ENCODE measurements at regions of chrX and their contacts with region 1.

Region 1: GRCh38 chrX:65985922-65986588 is 53.8 kb downstream of the VSIG4 start:
- DNase-seq: no peak
- H3K4me3 ChIP-seq: no peak overlapping the region
- H3K27ac ChIP-seq: no peak overlapping the region
- H3K4me1 ChIP-seq: no peaks in the 10 kb centered on the region
- H3K27me3 ChIP-seq: no peaks in the 10 kb centered on the region
- CTCF ChIP-seq: peak; percentile 66

Region 2: DNA sequence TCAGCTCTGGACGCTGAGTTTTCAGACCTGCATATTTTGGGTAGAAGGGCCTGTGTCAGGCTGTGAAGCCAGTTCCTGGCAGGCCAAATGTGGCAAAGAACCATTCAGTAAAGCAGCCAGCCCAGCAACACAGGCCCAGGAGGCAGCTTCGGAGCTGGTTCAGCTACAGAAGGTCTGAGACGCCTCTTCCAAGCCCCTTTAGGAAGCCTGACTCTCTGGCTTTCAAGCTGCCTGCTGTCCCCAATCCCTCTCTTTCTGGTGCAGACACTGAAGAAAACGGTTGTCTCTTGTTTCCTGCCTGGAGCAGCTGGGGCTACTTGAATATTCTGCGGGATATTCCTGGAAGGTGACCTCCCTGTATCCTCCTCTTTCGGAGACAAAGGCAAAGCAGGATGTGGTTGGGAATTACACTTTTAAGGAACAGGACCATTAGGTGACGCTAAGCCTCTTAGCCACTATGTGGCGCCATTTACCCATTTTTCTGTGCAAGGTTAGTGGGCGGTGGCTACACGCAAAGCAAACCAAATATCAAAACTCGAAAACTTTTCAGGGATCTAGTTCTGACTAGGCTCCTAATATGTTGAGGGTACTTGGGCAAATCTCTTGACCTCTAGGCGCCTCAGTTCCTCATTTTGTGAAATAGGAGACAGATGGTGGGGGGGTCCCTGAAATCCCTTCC is 404.3 kb before region 1 on chrX:
- intact Hi-C with region 1: loop called (anchors 2 kb)
- DNase-seq: peak; percentile 24
- H3K4me3 ChIP-seq: no peak overlapping the region
- H3K27ac ChIP-seq: no peak overlapping the region
- H3K4me1 ChIP-seq: no peaks in the 10 kb centered on the region
- H3K27me3 ChIP-seq: no peaks in the 10 kb centered on the region
- CTCF ChIP-seq: peak; percentile 71

Region 3: GRCh38 chrX:65595460-65595876 is 390.6 kb before region 1 on chrX:
- intact Hi-C with region 1: loop called (anchors 5 kb)
- DNase-seq: peak; percentile 91
- H3K4me3 ChIP-seq: no peak overlapping the region
- H3K27ac ChIP-seq: peak overlapping the region; percentile 84
- H3K4me1 ChIP-seq: peaks cover 19% of the 10 kb centered on the region
- H3K27me3 ChIP-seq: no peaks in the 10 kb centered on the region
- CTCF ChIP-seq: peak; percentile 96

Measured in left ventricle myocardium inferior (tissue), 1 donor.